ENCODE measurements at regions of chr12 and their contacts with region 1.

Region 1: GRCh38 chr12:113980537-113981337 is 14.6 kb upstream of the RBM19 start:
- DNase-seq: peak in 7 of 10 donors; percentile 15 to 56 (median 27)
- H3K4me3 ChIP-seq: no peak overlapping the region
- H3K27ac ChIP-seq: no peak overlapping the region
- H3K27me3 ChIP-seq: peaks cover 0 to 39% (median 14%) of the 10 kb centered on the region in 45 donors
- CTCF ChIP-seq: peak; percentile 80 to 99 (median 95)

Region 2: GRCh38 chr12:114508529-114509129 is 527.9 kb after region 1 on chr12:
- intact Hi-C with region 1: loop called (anchors 2 kb)
- DNase-seq: peak; percentile 33 to 88 (median 60)
- H3K4me3 ChIP-seq: no peak overlapping the region
- H3K27ac ChIP-seq: no peak overlapping the region
- H3K27me3 ChIP-seq: peaks cover 0 to 60% (median 16%) of the 10 kb centered on the region in 45 donors
- CTCF ChIP-seq: peak; percentile 63 to 90 (median 84)

Region 3: DNA sequence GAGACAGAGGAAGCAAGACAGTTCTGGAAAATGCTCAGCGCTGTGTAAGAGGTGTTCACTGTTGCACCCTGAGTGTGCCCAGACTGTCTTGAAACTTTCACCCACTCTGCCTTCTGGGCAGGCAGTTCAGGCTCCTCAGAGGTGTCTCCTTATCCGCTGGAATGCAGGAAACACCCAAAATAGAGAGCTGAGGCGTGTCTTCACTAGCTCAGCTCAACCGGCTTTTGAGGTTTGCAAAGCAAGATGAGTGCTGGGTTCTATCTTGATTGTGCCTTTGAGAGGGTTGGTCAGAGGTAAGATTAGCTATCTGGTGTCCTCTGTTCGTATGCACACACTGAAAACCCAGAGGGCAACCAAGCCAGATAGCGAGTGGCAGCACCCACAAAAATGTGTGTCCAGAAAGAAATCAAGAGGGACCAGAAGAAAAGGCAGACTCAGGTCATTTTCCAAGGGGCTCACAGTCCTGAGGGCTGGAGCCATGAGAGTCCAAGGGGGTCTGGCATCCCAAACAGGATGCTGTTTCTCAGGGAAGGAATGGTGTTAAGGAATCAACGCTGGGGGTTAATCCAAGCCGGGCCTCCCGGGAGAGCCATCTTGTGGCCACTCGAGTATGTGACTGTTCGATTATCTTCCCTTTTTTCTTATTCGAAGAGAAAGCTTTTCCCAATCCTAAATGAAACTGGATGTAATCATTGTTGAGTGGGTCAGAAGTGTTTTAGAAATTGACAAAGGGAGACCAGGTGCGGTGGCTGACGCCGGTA is 656.2 kb after region 1 on chr12:
- intact Hi-C with region 1: loop called (anchors 5 to 10 kb)
- DNase-seq: peak in 5 of 10 donors; percentile 6 to 46 (median 30)
- H3K4me3 ChIP-seq: no peak overlapping the region
- H3K27ac ChIP-seq: no peak overlapping the region
- H3K27me3 ChIP-seq: no peaks in the 10 kb centered on the region
- CTCF ChIP-seq: peak in 48 of 56 donors; percentile 9 to 57 (median 38)

Region 4: GRCh38 chr12:114848666-114849065 is 867.9 kb after region 1 on chr12:
- intact Hi-C with region 1: no loop called
- DNase-seq: no peak
- H3K4me3 ChIP-seq: no peak overlapping the region
- H3K27ac ChIP-seq: no peak overlapping the region
- H3K27me3 ChIP-seq: peaks cover 0 to 7% (median 0%) of the 10 kb centered on the region in 45 donors
- CTCF ChIP-seq: no peak

Measured in dorsolateral prefrontal cortex (tissue), 120 donors.